ENCODE measurements at regions of chr22 and their contacts with region 1.

Region 1: GRCh38 chr22:37328017-37328416 is 45.7 kb downstream of the CYTH4 start:
- DNase-seq: no peak
- H3K4me3 ChIP-seq: no peak overlapping the region
- H3K27ac ChIP-seq: no peak overlapping the region
- H3K27me3 ChIP-seq: peaks cover 0 to 52% (median 19%) of the 10 kb centered on the region in 45 donors
- CTCF ChIP-seq: no peak

Region 2: DNA sequence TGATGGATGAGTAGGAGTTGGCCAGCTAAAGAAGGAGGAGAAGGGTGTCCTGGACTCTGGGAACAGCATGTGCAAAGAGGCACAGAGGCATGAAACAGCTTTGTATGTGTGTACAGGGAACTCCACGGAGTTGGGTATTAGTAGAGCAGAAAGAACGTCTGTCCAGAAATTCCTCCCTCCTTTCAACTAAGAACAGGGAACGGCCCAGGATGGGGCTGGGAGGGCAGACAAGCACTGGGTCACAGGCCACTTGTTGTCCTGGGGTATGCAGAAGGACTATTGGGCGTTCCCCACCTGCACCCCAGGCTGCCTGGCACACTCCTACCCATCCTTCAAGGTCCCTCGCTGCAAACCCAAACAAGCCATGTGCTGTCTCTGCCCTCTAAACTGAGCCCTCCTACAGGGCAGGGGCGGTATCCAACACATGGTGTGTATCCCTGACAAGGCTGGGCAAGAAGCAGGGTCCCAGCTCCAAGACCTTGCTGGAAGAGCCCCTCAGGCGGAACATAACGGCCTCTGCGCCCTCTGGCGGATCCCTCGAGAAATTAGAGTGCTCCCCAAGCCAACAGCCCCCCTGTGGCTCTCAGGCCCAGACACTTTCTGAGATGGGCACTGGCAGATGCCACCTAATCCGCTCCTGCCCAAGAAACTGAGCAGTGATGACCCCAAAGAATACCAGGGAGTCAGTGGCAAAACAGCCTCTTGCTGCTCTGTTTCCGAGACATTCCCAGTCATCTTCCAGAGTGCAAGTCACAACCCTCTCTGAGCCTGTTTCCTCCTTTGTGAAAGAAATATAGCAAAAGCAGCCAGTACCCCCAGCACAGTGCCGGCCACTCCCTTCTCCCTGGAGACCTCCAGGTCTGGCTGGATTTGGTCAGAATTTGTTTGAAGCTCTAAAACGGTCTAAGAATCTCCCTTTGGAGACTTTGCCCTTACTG is 100.9 kb after region 1 on chr22:
- intact Hi-C with region 1: loop called (anchors 10 kb)
- DNase-seq: peak in 1 of 10 donors; percentile 31
- H3K4me3 ChIP-seq: no peak overlapping the region
- H3K27ac ChIP-seq: no peak overlapping the region
- H3K27me3 ChIP-seq: peaks cover 0 to 72% (median 16%) of the 10 kb centered on the region in 45 donors
- CTCF ChIP-seq: peak in 55 of 56 donors; percentile 25 to 73 (median 57)